Activated B cell treated with CpG ODN at 0.5 μM for 24 hours (primary cell): ENCODE measurements at regions of chr15 and their contacts with region 1.

Region 1: DNA sequence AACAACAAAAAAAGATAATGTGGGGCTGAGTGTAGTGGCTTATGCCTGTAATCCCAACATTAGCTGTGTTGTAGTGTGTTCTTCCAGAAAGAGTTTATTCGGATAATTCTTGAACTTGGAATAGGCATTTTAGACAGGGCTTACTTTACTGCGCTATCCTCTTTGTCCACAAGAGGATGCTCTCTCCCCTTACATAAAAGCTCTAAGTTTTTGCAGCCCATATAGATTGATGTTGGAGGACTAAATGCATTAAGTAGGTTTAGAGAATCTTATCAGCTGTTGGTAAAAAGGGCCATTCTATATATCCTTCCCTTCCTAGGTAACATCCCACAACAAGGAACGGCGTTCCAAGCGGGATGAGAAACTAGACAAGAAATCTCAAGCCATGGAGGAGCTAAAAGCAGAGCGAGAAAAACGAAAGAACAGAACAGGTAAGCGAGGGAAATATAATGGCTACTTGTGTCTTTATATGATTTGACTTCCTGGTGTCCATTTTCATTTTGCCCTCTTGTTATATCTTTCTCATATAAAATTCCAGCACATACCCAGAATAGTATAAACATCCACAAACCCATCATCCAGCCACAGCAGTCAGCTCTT is 27.8 kb upstream of the ITPKA start:
- DNase-seq: no peak
- ATAC-seq: peak; percentile 50
- H3K4me3 Mint-ChIP-seq: no peak overlapping the region
- H3K27ac Mint-ChIP-seq: no peak overlapping the region
- H3K4me1 Mint-ChIP-seq: peaks cover 5% of the 10 kb centered on the region
- H3K27me3 Mint-ChIP-seq: no peaks in the 10 kb centered on the region
- CTCF ChIP-seq: no peak

Region 2: DNA sequence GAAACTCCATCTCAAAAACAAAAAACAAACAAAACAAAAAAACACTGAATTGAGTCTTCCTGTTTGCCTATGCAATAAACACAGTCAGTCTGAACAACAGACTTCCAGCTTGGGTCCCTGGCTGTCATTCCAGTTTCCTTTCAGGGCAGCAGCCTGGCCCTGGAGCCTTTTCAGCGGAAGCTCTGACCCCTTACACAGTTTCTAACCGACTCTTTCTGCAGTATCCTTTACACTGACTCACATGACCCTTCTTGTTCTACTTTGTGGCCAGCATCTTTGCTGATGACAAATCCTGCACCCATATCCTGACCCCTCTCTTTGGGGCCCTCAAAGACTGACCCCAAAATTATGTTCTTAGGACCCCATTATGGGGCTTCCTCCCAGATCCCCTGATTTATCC is 311.5 kb before region 1 on chr15:
- CTCF ChIA-PET with region 1: no interaction called
- POLR2A ChIA-PET with region 1: no interaction called
- intact Hi-C with region 1: no loop called
- DNase-seq: no peak
- ATAC-seq: no peak
- H3K4me3 Mint-ChIP-seq: no peak overlapping the region
- H3K27ac Mint-ChIP-seq: no peak overlapping the region
- H3K4me1 Mint-ChIP-seq: no peaks in the 10 kb centered on the region
- H3K27me3 Mint-ChIP-seq: peaks cover 2% of the 10 kb centered on the region
- CTCF ChIP-seq: no peak

Region 3: DNA sequence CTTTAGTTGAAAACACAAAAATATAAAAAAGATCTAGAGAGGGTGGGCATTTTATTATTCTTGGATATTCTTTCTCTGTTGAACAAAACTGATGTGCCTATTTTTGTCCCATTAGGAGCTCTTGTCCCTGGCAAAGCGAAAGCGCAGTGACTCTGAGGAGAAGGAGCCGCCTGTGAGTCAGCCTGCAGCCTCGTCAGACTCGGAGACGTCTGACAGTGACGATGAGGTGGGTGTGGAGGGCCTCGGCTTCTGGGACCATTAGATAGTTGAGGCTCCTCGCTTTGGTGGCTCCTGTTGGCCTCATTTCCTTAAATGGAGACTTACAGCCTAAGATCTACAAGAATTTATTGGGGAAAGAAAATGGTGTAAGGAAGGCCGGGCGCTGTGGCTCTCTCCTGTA is 27.7 kb before region 1 on chr15:
- CTCF ChIA-PET with region 1: no interaction called
- POLR2A ChIA-PET with region 1: no interaction called
- intact Hi-C with region 1: no loop called
- DNase-seq: no peak
- ATAC-seq: no peak
- H3K4me3 Mint-ChIP-seq: no peak overlapping the region
- H3K27ac Mint-ChIP-seq: no peak overlapping the region
- H3K4me1 Mint-ChIP-seq: peaks cover 7% of the 10 kb centered on the region
- H3K27me3 Mint-ChIP-seq: no peaks in the 10 kb centered on the region
- CTCF ChIP-seq: no peak

Region 4: GRCh38 chr15:41483115-41483514 is 17.2 kb after region 1 on chr15:
- CTCF ChIA-PET with region 1: interaction called, 3 read pairs
- POLR2A ChIA-PET with region 1: no interaction called
- intact Hi-C with region 1: loop called (anchors 2 kb)
- DNase-seq: no peak
- ATAC-seq: peak; percentile 85
- H3K4me3 Mint-ChIP-seq: no peak overlapping the region
- H3K27ac Mint-ChIP-seq: peak overlapping the region; percentile 73
- H3K4me1 Mint-ChIP-seq: peaks cover 19% of the 10 kb centered on the region
- H3K27me3 Mint-ChIP-seq: peaks cover 3% of the 10 kb centered on the region
- CTCF ChIP-seq: no peak

Region 5: DNA sequence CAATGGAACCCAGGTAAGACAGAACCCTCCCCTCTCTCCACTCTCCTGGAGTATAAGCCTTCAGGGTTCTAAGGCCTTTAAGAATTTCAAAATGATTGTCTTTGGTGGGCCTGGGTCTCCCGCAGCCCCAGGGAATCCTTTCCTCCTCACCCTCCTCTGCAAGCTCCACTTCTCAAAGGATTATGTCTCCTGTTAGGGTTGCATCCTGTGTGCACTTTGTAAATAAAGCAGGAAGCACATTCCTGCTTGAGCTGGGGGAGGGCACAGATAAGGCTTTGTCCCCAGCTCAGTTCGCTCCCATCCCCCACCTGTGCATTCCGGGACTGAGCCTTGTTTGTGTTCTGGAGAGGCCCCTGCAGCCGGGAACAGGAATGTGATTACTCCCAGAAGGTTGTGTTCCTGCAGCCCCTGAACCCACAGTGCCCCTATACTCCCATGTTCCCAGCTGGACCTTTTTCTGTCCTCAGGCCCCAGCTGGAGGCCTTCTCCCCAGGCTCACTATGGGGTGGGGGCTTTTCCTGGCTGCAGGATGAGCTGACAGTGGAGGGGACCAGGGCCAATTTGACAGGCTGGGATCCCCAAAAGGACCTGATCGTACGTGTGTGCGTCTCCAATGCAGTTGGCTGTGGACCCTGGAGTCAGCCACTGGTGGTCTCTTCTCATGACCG is 102.6 kb after region 1 on chr15:
- CTCF ChIA-PET with region 1: no interaction called
- POLR2A ChIA-PET with region 1: no interaction called
- intact Hi-C with region 1: no loop called
- DNase-seq: no peak
- ATAC-seq: no peak
- H3K4me3 Mint-ChIP-seq: no peak overlapping the region
- H3K27ac Mint-ChIP-seq: no peak overlapping the region
- H3K4me1 Mint-ChIP-seq: no peaks in the 10 kb centered on the region
- H3K27me3 Mint-ChIP-seq: peaks cover 8% of the 10 kb centered on the region
- CTCF ChIP-seq: no peak

Region 6: GRCh38 chr15:41585127-41586047 is 119.5 kb after region 1 on chr15:
- CTCF ChIA-PET with region 1: interaction called, 13 read pairs
- POLR2A ChIA-PET with region 1: no interaction called
- intact Hi-C with region 1: loop called (anchors 1 kb)
- DNase-seq: peak; percentile 29
- ATAC-seq: peak; percentile 61
- H3K4me3 Mint-ChIP-seq: peak overlapping the region; percentile 78
- H3K27ac Mint-ChIP-seq: no peak overlapping the region
- H3K4me1 Mint-ChIP-seq: peaks cover 7% of the 10 kb centered on the region
- H3K27me3 Mint-ChIP-seq: peaks cover 53% of the 10 kb centered on the region
- CTCF ChIP-seq: no peak

Region 7: DNA sequence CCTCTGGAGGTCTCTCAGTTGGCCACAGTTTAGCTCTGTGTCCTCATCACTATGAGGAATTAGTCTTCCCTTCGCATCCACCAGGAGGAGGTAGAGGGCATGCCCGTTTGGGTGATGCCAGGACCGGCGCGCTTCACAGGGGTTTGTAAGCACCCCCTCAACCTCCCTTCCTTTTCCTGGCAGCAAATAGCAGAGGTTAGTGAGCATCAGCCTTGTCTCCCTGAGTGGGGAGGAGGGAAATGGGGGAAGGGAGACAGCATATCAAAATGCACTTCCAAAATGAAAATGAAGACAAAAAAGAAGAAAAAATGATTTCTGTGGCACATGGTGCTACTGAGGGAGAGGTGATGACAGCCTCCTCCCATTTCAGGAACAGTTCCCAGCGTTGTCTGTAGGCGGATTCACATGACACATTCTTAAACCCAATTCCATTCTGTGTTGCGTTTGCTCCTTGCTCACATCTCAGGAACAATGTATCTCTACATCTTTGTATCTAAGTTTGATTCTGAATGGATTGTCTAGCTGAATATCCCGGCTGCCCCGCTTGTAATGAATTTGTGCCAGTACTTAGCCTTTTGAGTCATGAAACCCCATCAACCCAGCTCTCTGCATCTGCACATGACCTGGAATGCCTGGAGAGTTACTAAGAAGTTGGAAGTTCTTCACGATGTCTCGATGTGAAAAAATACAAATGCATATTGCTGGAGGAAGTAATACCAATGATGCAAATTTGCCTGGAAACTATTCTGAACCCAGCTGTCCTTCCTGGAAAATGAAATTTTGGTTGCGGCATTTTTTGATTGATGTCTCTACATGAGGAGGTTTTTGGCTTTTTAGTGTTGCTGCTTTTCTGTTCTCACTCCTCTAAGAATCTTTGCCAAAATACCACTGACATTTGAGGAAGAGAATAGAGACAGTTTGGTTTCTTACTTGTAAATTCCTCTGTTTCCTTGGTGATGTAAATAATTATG is 138.3 kb after region 1 on chr15:
- CTCF ChIA-PET with region 1: interaction called, 10 read pairs
- POLR2A ChIA-PET with region 1: no interaction called
- intact Hi-C with region 1: loop called (anchors 1 kb)
- DNase-seq: peak; percentile 25
- ATAC-seq: peak; percentile 96
- H3K4me3 Mint-ChIP-seq: peak overlapping the region; percentile 64
- H3K27ac Mint-ChIP-seq: no peak overlapping the region
- H3K4me1 Mint-ChIP-seq: peaks cover 10% of the 10 kb centered on the region
- H3K27me3 Mint-ChIP-seq: peaks cover 26% of the 10 kb centered on the region
- CTCF ChIP-seq: peak; percentile 13

Region 8: DNA sequence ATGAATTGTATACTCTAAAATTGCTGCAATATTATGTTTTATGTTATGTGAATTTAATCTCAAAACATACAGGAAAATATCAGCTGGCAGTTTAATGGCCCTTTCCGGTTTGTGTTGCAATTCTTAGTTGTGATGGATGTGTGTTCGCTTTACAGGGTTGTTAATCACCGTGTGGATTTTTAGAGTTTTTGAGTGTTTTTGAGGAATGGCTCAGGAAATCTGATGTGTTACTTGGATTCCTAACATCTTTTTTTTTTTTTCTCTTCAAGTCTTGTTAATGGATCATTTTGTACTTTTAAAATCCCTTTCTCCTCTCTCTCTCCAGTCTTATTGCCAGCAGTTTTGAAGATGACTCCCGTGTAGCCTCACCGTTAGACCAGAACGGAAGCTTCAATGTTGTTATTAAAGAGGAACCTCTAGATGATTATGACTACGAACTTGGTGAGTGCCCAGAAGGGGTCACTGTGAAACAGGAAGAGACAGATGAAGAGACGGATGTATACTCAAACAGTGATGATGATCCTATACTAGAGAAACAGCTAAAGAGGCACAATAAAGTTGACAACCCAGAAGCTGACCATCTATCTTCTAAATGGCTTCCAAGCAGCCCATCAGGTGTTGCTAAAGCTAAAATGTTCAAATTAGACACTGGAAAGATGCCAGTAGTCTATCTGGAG is 230.0 kb after region 1 on chr15:
- CTCF ChIA-PET with region 1: interaction called, 10 read pairs
- POLR2A ChIA-PET with region 1: no interaction called
- intact Hi-C with region 1: loop called (anchors 5 kb)
- DNase-seq: no peak
- ATAC-seq: peak; percentile 98
- H3K4me3 Mint-ChIP-seq: peak overlapping the region; percentile 35
- H3K27ac Mint-ChIP-seq: peak overlapping the region; percentile 76
- H3K4me1 Mint-ChIP-seq: peaks cover 45% of the 10 kb centered on the region
- H3K27me3 Mint-ChIP-seq: no peaks in the 10 kb centered on the region
- CTCF ChIP-seq: no peak

Region 9: DNA sequence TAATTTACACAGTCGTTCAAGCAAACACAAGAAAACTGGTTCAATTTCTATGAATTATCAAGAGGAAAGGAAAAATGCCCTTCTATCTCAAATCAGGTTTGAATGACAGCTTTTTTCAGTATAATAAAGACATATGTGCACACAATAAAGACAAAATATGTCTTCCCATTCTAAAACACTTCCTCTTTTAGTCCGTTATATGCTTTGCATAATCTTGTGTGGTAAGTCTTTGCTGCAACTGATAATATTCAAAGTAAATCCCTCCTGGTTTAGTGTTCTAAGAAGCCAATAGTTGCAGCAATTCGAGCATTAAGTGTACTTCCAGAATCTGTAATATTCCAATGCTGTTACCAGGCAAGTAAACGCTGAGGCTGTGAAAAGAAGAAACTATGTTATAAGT is 264.6 kb after region 1 on chr15:
- CTCF ChIA-PET with region 1: interaction called, 4 read pairs
- POLR2A ChIA-PET with region 1: no interaction called
- intact Hi-C with region 1: loop called (anchors 10 kb)
- DNase-seq: no peak
- ATAC-seq: peak; percentile 62
- H3K4me3 Mint-ChIP-seq: peak overlapping the region; percentile 44
- H3K27ac Mint-ChIP-seq: peak overlapping the region; percentile 63
- H3K4me1 Mint-ChIP-seq: peaks cover 13% of the 10 kb centered on the region
- H3K27me3 Mint-ChIP-seq: no peaks in the 10 kb centered on the region
- CTCF ChIP-seq: no peak

Region 10: DNA sequence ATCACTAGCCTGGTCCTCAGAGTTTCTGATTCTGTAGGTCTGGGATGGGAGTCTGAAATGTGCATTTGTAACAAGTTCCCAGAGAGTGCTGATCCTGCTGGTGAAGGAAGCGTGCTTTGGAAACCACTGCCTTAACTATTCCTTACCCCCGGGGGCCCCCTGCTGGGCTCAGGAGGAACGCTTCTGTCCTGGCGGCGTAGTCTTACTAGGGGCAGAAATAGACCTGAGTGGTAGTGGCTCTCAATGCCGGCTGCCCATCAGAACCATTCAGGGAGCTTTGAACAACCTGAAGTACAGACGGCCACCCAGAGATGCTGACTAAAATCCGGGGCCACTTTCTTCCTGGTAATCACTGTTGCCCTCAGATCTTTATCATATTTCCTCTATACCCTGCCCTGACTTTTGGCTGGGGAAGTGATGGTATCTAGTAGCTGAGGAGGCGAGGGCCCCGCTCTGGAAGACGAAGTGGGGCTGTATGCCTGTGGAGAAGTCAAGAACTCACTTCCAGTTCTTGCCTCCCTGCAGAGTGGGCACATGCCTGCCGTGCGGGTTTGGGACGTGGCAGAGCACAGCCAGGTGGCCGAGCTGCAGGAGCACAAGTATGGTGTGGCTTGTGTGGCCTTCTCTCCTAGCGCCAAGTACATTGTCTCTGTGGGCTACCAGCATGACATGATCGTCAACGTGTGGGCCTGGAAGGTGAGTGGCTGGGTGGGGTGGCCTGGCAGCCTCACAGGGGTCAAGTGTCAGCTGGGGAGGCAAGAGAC is 345.7 kb after region 1 on chr15:
- CTCF ChIA-PET with region 1: interaction called, 8 read pairs
- POLR2A ChIA-PET with region 1: no interaction called
- intact Hi-C with region 1: loop called (anchors 1 kb)
- DNase-seq: peak; percentile 67
- ATAC-seq: peak; percentile 97
- H3K4me3 Mint-ChIP-seq: no peak overlapping the region
- H3K27ac Mint-ChIP-seq: no peak overlapping the region
- H3K4me1 Mint-ChIP-seq: peaks cover 11% of the 10 kb centered on the region
- H3K27me3 Mint-ChIP-seq: no peaks in the 10 kb centered on the region
- CTCF ChIP-seq: peak; percentile 85